Heart left ventricle (tissue), 16 donors: ENCODE measurements at regions of chr1 and their contacts with region 1.

Region 1: GRCh38 chr1:9823943-9824701 is at the start of gene CLSTN1:
- DNase-seq: peak; percentile 91 to 96 (median 92)
- ATAC-seq: peak; percentile 63 to 91 (median 84)
- H3K4me3 ChIP-seq: peak within 1 kb of the TSS; percentile 62 to 98 (median 88)
- H3K27ac ChIP-seq: peak within 1 kb of the TSS; percentile 63 to 93 (median 88)
- H3K4me1 ChIP-seq: peaks cover 12 to 43% (median 35%) of the 10 kb centered on the region in 12 donors
- H3K27me3 ChIP-seq: no peaks in the 10 kb centered on the region
- CTCF ChIP-seq: no peak
- POLR2A ChIP-seq: peak in 1 of 2 donors; percentile 31
- total RNA-seq, gene CLSTN1: 50.6 to 79.4 (median 64.3) TPM

Region 2: GRCh38 chr1:9861360-9861759 is 37.2 kb after region 1 on chr1:
- intact Hi-C with region 1: loop called in 2 of 10 experiments (anchors 5 kb)
- DNase-seq: peak in 1 of 5 donors; percentile 22
- ATAC-seq: no peak
- H3K4me3 ChIP-seq: no peak overlapping the region
- H3K27ac ChIP-seq: no peak overlapping the region
- H3K4me1 ChIP-seq: peaks cover 0 to 18% (median 6%) of the 10 kb centered on the region in 12 donors
- H3K27me3 ChIP-seq: no peaks in the 10 kb centered on the region
- CTCF ChIP-seq: no peak
- POLR2A ChIP-seq: no peak

Region 3: GRCh38 chr1:10679496-10680220 is 855.5 kb after region 1 on chr1:
- intact Hi-C with region 1: loop called in 1 of 10 experiments (anchors 10 kb)
- DNase-seq: peak in 4 of 5 donors; percentile 47 to 59 (median 56)
- ATAC-seq: peak in 1 of 4 donors; percentile 17
- H3K4me3 ChIP-seq: peak overlapping the region in 1 of 12 donors; percentile 2
- H3K27ac ChIP-seq: peak overlapping the region in 8 of 12 donors; percentile 38 to 94 (median 52)
- H3K4me1 ChIP-seq: peaks cover 15 to 100% (median 87%) of the 10 kb centered on the region in 12 donors
- H3K27me3 ChIP-seq: no peaks in the 10 kb centered on the region
- CTCF ChIP-seq: no peak
- POLR2A ChIP-seq: no peak